ENCODE measurements at regions of chr6 and their contacts with region 1.

Region 1: GRCh38 chr6:33172688-33173534 is 19.4 kb downstream of the COL11A2 start:
- DNase-seq: peak; percentile 53
- ATAC-seq: peak; percentile 65
- H3K4me3 ChIP-seq: peak overlapping the region in 1 of 3 experiments; percentile 5; a peak in 1 of 6 replicates
- H3K27ac ChIP-seq: no peak overlapping the region
- H3K4me1 ChIP-seq: peaks cover 22% of the 10 kb centered on the region
- H3K27me3 ChIP-seq: peaks cover 2 to 48% of the 10 kb centered on the region in 2 experiments; a peak in 4 of 5 replicates
- CTCF ChIP-seq: peak; percentile 91
- EP300 ChIP-seq: no peak
- POLR2A ChIP-seq: no peak
- RAD21 ChIP-seq: peak; percentile 91

Region 2: GRCh38 chr6:33118525-33119123 is 54.3 kb before region 1 on chr6:
- CTCF ChIA-PET with region 1: interaction called, 14 read pairs
- POLR2A ChIA-PET with region 1: no interaction called
- in situ Hi-C with region 1: no loop called
- intact Hi-C with region 1: loop called (anchors 1 kb)
- DNase-seq: peak; percentile 66
- ATAC-seq: no peak
- H3K4me3 ChIP-seq: no peak overlapping the region
- H3K27ac ChIP-seq: no peak overlapping the region
- H3K4me1 ChIP-seq: peaks cover 32% of the 10 kb centered on the region
- H3K27me3 ChIP-seq: peaks cover 2 to 30% of the 10 kb centered on the region in 2 experiments; a peak in 4 of 5 replicates
- CTCF ChIP-seq: peak; percentile 75
- EP300 ChIP-seq: no peak
- POLR2A ChIP-seq: no peak
- RAD21 ChIP-seq: no peak

Region 3: DNA sequence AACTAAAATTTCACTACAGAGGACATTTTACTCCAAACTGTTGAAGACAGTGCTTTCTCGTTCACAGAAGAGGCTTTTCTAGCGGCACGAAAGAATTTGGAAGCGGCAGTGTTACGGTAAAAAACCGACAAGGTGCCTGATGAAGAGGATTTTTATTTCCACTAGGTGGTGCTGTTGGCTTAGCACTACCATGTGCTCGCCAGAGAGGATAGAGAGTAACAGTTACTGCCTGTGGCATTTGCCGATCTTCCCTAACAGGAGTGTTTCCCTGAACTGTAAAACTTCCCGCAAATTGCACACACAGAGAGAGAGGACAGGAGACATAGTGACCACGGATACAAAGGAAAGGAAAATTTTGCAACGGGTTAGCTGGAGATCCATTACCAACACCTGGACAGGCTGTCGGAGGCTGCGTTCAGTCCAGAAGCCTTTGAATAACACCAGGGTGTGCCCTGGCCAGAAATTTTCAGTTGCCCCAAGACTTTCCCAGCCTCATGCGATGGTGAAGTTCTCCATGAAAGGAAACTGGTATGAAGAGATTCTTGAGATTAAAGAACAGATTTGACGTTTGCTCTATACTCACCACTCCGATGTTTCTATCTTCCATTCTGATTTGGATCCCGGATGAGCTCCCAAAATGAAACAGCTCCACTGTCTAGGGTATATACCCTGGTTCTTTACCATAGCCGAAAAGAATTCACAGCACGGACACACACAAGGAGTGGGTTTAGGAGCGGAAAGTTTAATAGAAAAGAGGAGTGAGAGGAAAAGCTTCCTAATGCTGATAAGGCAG is 49.0 kb before region 1 on chr6:
- CTCF ChIA-PET with region 1: interaction called, 14 read pairs
- POLR2A ChIA-PET with region 1: no interaction called
- in situ Hi-C with region 1: no loop called
- intact Hi-C with region 1: no loop called
- DNase-seq: peak; percentile 55
- ATAC-seq: peak; percentile 76
- H3K4me3 ChIP-seq: no peak overlapping the region
- H3K27ac ChIP-seq: no peak overlapping the region
- H3K4me1 ChIP-seq: peaks cover 38% of the 10 kb centered on the region
- H3K27me3 ChIP-seq: no peaks in the 10 kb centered on the region; a peak in 1 of 5 replicates
- CTCF ChIP-seq: peak; percentile 87
- EP300 ChIP-seq: no peak
- POLR2A ChIP-seq: no peak
- RAD21 ChIP-seq: peak; percentile 66

Region 4: GRCh38 chr6:33161354-33162331 is 11.3 kb before region 1 on chr6:
- CTCF ChIA-PET with region 1: interaction called, 11 read pairs
- POLR2A ChIA-PET with region 1: interaction called, 3 read pairs
- in situ Hi-C with region 1: no loop called
- intact Hi-C with region 1: no loop called
- DNase-seq: peak; percentile 23
- ATAC-seq: peak; percentile 84
- H3K4me3 ChIP-seq: peak overlapping the region; percentile 49 to 74 (median 56)
- H3K27ac ChIP-seq: no peak overlapping the region
- H3K4me1 ChIP-seq: peaks cover 54% of the 10 kb centered on the region
- H3K27me3 ChIP-seq: peaks cover 6 to 20% of the 10 kb centered on the region in 2 experiments; a peak in 4 of 5 replicates
- CTCF ChIP-seq: peak; percentile 96
- EP300 ChIP-seq: no peak
- POLR2A ChIP-seq: no peak
- RAD21 ChIP-seq: peak; percentile 83

Region 5: GRCh38 chr6:33445119-33445603 is 272.2 kb after region 1 on chr6:
- CTCF ChIA-PET with region 1: no interaction called
- POLR2A ChIA-PET with region 1: no interaction called
- in situ Hi-C with region 1: no loop called
- intact Hi-C with region 1: no loop called
- DNase-seq: no peak
- ATAC-seq: no peak
- H3K4me3 ChIP-seq: no peak overlapping the region
- H3K27ac ChIP-seq: no peak overlapping the region
- H3K4me1 ChIP-seq: no peaks in the 10 kb centered on the region
- H3K27me3 ChIP-seq: no peaks in the 10 kb centered on the region; a peak in 1 of 5 replicates
- CTCF ChIP-seq: no peak
- EP300 ChIP-seq: no peak
- POLR2A ChIP-seq: no peak
- RAD21 ChIP-seq: no peak

Measured in HepG2 (cell line).